ENCODE measurements at regions of chr7 and their contacts with region 1.

Region 1: GRCh38 chr7:137647905-137648565 is 198.7 kb downstream of the DGKI start:
- DNase-seq: no peak
- H3K4me3 ChIP-seq: no peak overlapping the region
- H3K27ac ChIP-seq: no peak overlapping the region
- H3K4me1 ChIP-seq: no peaks in the 10 kb centered on the region
- H3K27me3 ChIP-seq: peaks cover 0 to 10% of the 10 kb centered on the region in 2 donors
- CTCF ChIP-seq: no peak
- POLR2A ChIP-seq: no peak

Region 2: DNA sequence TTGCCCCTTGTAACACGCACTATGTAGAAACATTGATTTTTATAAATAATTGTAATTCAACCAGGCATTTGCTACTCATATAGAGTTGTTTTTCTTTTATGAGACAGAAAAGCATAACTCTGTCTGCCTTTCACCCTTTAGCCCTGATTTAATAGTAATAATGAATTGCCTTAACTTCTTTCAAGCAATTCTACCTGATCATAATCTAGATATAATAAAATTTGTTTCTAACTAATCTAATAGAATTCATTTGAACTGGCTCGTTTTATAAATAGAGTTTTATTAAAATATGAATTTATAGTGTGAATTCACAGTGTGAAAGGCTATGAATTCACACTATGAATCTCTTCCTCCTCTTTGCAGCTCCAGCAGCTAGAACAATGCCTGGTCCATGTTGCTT is 120.4 kb before region 1 on chr7:
- intact Hi-C with region 1: loop called (anchors 5 kb)
- DNase-seq: no peak
- H3K4me3 ChIP-seq: no peak overlapping the region
- H3K27ac ChIP-seq: no peak overlapping the region
- H3K4me1 ChIP-seq: no peaks in the 10 kb centered on the region
- H3K27me3 ChIP-seq: no peaks in the 10 kb centered on the region
- CTCF ChIP-seq: no peak
- POLR2A ChIP-seq: no peak

Region 3: DNA sequence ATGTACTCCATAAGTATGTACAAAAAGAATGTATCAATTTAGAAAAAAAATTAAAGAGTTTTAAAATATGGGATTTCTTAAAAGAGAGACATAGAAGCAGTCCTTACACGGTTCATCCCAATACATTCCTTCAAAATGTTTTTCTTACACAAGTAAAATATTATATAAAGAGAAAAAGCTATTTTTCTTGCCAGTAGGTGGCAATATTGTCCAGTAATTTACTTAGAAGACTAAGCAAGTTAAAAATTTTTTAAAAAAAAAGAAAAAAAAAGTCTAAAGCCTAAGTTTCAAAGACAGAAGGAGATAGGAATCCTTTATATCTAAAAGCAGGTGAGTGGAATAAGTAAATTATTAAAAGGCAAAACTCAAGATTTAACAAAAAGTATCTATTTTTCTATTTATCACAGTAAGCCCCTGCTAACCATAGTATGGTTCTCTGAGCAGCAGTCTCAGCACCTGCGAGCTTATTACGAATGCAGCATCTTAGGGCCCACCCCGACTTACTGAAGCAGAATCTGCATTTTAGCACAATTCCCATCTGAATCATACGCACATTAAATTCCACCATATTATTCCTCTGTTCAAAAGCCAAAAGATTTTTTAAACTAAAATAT is 41.9 kb before region 1 on chr7:
- intact Hi-C with region 1: no loop called
- DNase-seq: no peak
- H3K4me3 ChIP-seq: no peak overlapping the region
- H3K27ac ChIP-seq: no peak overlapping the region
- H3K4me1 ChIP-seq: no peaks in the 10 kb centered on the region
- H3K27me3 ChIP-seq: peaks cover 0 to 2% of the 10 kb centered on the region in 2 donors
- CTCF ChIP-seq: peak in 2 of 3 donors; percentile 28 to 31
- POLR2A ChIP-seq: no peak

Region 4: GRCh38 chr7:137670199-137671071 is 22.4 kb after region 1 on chr7:
- intact Hi-C with region 1: no loop called
- DNase-seq: no peak
- H3K4me3 ChIP-seq: no peak overlapping the region
- H3K27ac ChIP-seq: no peak overlapping the region
- H3K4me1 ChIP-seq: no peaks in the 10 kb centered on the region
- H3K27me3 ChIP-seq: no peaks in the 10 kb centered on the region
- CTCF ChIP-seq: no peak
- POLR2A ChIP-seq: no peak

Region 5: DNA sequence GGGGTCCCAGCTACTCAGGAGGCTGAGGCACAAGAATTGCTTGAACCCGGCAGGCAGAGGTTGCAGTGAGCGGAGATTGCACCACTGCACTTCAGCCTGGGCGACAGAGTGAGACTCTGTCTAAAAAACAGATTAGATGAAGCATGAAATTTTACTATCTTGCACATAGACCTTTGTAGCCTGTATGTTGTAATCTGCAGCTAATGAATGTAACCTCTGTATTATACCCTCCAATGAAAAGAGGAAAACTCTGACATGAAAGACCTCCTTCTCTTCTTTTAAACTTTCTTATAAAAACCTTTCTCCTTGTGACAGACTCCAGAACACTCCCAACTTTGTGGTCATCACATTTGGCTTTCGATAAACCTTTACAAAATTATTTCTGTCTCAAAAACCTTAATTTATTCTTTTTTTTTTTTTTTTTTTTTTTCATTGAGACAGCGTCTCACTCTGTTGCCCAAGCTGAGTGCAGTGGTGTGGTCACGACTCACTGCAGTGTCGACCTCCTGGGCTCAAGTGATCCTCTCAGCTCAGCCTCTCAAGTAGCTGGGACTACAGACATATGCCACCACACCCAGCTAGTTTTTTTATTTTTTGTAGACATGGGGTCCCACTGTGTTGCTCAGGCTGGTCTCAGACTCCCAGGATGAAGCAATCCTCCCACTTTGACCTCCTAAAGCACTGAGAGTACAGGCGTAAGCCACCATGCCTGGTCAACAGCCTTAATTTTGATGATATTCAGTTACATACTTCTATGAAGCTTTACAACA is 955.7 kb after region 1 on chr7:
- intact Hi-C with region 1: no loop called
- DNase-seq: no peak
- H3K4me3 ChIP-seq: no peak overlapping the region
- H3K27ac ChIP-seq: no peak overlapping the region
- H3K4me1 ChIP-seq: no peaks in the 10 kb centered on the region
- H3K27me3 ChIP-seq: no peaks in the 10 kb centered on the region
- CTCF ChIP-seq: no peak
- POLR2A ChIP-seq: no peak